Tibial artery (tissue), 4 donors: ENCODE measurements at regions of chr6 and their contacts with region 1.

Region 1: DNA sequence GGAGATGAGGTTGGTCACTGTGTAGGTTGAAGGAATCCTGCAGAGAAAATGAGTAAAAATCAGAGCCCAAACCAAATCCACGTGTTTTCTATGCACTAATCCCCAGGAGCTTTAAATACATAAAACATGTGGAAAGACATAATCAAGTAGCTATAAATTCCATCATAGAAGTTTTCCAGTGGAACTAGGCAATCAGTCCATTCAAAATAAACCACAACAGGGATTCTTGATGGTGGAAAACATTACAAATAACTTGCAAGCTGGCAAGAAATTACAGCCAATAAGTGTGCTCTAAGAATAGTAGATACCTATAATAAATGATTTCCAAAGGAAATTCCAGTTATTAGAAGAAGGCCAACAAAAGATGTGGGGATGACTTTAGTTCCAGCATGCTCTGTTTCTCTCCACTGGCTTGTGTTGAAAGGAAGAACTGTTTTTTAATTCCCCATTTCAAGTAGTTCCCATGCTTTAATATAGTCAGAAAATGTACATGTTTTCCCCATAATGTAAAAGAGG is 49.8 kb upstream of the ADGRG6 start:
- DNase-seq: no peak
- H3K4me3 ChIP-seq: no peak overlapping the region
- H3K27ac ChIP-seq: no peak overlapping the region
- H3K4me1 ChIP-seq: peaks cover 0 to 14% (median 5%) of the 10 kb centered on the region in 4 donors
- H3K27me3 ChIP-seq: no peaks in the 10 kb centered on the region
- CTCF ChIP-seq: no peak

Region 2: DNA sequence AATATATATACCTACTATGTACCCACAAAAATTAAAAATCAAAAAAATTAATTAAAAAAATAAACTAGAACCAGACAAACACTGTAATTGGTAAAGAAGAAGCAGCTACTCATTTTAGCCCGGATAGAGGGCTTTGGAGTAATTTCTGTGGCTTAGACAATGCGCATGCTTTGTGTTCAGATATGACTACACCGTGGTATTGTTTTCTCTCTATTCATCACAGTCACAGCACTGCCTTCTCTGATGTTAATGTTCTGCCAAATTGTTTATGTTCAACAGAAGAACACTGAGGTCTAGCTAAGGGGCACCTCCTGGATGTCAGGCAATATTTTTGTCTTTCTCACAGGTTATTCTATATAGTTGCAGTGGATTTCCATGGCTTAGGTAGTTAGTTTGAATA is 196.8 kb before region 1 on chr6:
- intact Hi-C with region 1: loop called (anchors 5 kb)
- DNase-seq: no peak
- H3K4me3 ChIP-seq: no peak overlapping the region
- H3K27ac ChIP-seq: no peak overlapping the region
- H3K4me1 ChIP-seq: no peaks in the 10 kb centered on the region
- H3K27me3 ChIP-seq: no peaks in the 10 kb centered on the region
- CTCF ChIP-seq: no peak